PC-3 (cell line): ENCODE measurements at regions of chr5 and their contacts with region 1.

Region 1: GRCh38 chr5:174065528-174066197 is 20.2 kb downstream of the NSG2 start:
- DNase-seq: no peak
- ATAC-seq: no peak
- H3K4me3 ChIP-seq: no peak overlapping the region
- H3K27ac ChIP-seq: no peak overlapping the region
- H3K4me1 ChIP-seq: no peaks in the 10 kb centered on the region
- H3K27me3 ChIP-seq: peaks cover 74% of the 10 kb centered on the region
- CTCF ChIP-seq: no peak

Region 2: GRCh38 chr5:173547579-173547978 is 518.1 kb before region 1 on chr5:
- CTCF ChIA-PET with region 1: no interaction called
- POLR2A ChIA-PET with region 1: no interaction called
- intact Hi-C with region 1: no loop called
- DNase-seq: peak; percentile 61
- ATAC-seq: peak; percentile 93
- H3K4me3 ChIP-seq: no peak overlapping the region
- H3K27ac ChIP-seq: no peak overlapping the region
- H3K4me1 ChIP-seq: peaks cover 8% of the 10 kb centered on the region; the same call in 1 of the 2 replicates
- H3K27me3 ChIP-seq: 0 out of 2 replicates have a peak, but pooled peaks cover 5% of the 10 kb centered on the region
- CTCF ChIP-seq: no peak

Region 3: GRCh38 chr5:174003795-174004194 is 61.9 kb before region 1 on chr5:
- CTCF ChIA-PET with region 1: no interaction called
- POLR2A ChIA-PET with region 1: no interaction called
- intact Hi-C with region 1: loop called (anchors 10 kb)
- DNase-seq: no peak
- ATAC-seq: no peak
- H3K4me3 ChIP-seq: no peak overlapping the region
- H3K27ac ChIP-seq: no peak overlapping the region
- H3K4me1 ChIP-seq: no peaks in the 10 kb centered on the region
- H3K27me3 ChIP-seq: peaks cover 63% of the 10 kb centered on the region
- CTCF ChIP-seq: no peak